Pancreas (tissue), 10 donors: ENCODE measurements at regions of chr5 and their contacts with region 1.

Region 1: DNA sequence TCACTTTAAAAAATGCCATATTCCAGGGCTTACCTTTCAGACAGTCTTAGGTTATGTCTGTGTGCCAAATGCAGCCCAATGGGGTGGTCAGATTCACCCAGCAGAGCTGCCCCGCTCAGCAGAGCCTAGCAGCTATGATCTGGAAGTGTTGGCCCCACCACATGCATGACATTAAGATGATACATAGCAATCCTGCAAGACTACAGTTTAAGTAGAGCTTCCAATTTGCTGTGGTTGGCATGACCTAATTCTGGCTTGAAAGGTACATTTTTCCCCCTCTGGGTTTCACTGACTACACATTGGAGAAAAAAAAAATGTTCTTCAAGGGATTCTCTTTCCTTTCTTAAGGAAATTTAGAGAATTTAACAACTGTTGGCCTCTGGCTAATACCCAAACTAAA is 22.5 kb downstream of the MEF2C start:
- DNase-seq: no peak
- ATAC-seq: no peak
- H3K4me3 ChIP-seq: no peak overlapping the region
- H3K27ac ChIP-seq: no peak overlapping the region
- H3K4me1 ChIP-seq: no peaks in the 10 kb centered on the region
- H3K27me3 ChIP-seq: no peaks in the 10 kb centered on the region
- CTCF ChIP-seq: no peak

Region 2: GRCh38 chr5:88761269-88761850 is 99.1 kb before region 1 on chr5:
- intact Hi-C with region 1: loop called in 1 of 3 experiments (anchors 10 kb)
- DNase-seq: no peak
- ATAC-seq: peak in 2 of 4 donors; percentile 29 to 38
- H3K4me3 ChIP-seq: no peak overlapping the region
- H3K27ac ChIP-seq: no peak overlapping the region
- H3K4me1 ChIP-seq: no peaks in the 10 kb centered on the region
- H3K27me3 ChIP-seq: no peaks in the 10 kb centered on the region
- CTCF ChIP-seq: no peak